ENCODE measurements at regions of chr11 and their contacts with region 1.

Region 1: DNA sequence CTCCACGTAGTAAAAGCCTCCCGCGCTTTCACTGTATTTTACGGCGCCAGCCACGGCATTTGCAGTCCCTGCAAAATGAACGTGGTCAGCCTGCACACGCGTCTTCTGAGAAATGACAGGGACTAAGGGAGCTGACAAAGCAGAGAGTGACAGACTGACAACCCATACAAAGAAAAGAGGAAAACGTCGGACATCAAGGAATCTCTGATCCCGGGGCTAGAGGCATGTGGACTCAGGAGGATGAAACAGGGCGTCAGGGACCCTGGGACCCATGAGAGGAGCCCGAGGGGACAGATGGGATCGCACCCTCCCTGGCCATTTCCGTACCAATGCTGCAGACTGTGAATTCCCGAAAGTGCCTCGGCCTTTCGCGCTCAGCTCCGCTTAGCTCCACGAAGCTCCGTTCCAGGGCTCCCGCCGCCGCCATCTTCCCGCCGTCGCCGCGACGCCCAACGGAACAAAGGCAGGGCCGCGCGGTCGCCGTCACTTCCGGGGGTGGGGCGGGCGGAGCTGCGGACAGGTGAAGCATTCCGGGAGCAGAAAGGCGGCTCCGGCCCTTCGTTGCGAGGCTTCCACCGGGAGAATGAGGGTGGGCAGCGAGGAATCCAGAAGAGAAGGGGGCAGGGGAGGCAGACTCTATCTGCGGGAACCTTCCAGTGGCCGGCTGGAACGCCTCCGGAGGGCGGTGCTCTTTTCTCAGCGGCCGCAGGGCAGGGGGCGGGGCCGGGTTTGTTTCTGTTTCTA is at the start of gene NUP160:
- DNase-seq: peak; percentile 74 to 93 (median 86)
- ATAC-seq: peak; percentile 86
- H3K4me3 ChIP-seq: peak within 1 kb of the TSS; percentile 75
- H3K4me3 Mint-ChIP-seq: peak within 1 kb of the TSS; percentile 100
- H3K27ac ChIP-seq: peak within 1 kb of the TSS; percentile 82 to 94
- H3K27ac Mint-ChIP-seq: peak within 1 kb of the TSS; percentile 98
- H3K4me1 ChIP-seq: peaks cover 46% of the 10 kb centered on the region
- H3K4me1 Mint-ChIP-seq: peaks cover 66% of the 10 kb centered on the region
- H3K27me3 ChIP-seq: no peaks in the 10 kb centered on the region
- H3K27me3 Mint-ChIP-seq: no peaks in the 10 kb centered on the region
- CTCF ChIP-seq: peak; percentile 15
- total RNA-seq, gene NUP160: 41.9 to 47.9 TPM

Region 2: DNA sequence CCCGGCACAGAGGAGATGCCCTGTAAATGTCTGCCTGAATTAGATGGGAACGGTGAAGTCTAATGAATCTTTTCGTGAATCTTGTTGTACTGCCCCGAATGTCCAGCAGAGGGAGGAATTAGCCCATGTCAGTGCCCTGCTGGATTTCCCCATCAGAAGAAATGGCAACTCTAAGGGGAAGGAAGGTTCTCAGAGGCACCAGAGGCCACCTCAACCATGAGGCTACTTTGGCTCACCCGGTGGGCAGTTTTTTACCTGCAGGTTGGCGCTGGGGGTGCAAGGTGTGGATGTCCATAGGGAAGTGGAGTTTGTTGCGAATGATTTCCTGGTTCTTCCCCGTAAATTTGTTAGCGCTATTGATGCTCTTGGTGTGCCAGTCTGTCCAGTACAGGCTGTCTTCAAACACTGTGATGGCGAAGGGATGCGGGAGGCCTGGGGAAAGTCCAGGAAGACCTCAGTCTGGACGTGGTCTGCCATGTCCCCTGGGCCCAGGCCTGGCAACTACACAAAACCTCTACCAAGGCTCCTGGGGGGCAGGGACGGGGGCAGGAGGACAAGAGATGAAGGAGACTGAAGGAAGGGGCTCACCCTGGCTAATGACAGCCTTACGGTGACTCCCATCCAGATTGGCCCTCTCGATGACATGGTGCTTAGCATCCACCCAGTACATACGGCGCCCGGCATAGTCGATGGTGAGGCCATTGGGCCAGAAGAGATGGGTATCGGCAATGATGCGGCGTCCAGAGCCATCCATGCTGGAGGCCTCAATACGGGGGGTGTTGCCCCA is 958.2 kb before region 1 on chr11:
- CTCF ChIA-PET with region 1: no interaction called
- POLR2A ChIA-PET with region 1: no interaction called
- intact Hi-C with region 1: loop called in 1 of 2 experiments (anchors 5 kb)
- DNase-seq: peak; percentile 47 to 86 (median 68)
- ATAC-seq: peak; percentile 96
- H3K4me3 ChIP-seq: no peak overlapping the region
- H3K4me3 Mint-ChIP-seq: no peak overlapping the region
- H3K27ac ChIP-seq: no peak overlapping the region
- H3K27ac Mint-ChIP-seq: no peak overlapping the region
- H3K4me1 ChIP-seq: no peaks in the 10 kb centered on the region
- H3K4me1 Mint-ChIP-seq: no peaks in the 10 kb centered on the region
- H3K27me3 ChIP-seq: peaks cover 0 to 4% of the 10 kb centered on the region in 2 experiments
- H3K27me3 Mint-ChIP-seq: peaks cover 13% of the 10 kb centered on the region
- CTCF ChIP-seq: peak; percentile 80

Region 3: DNA sequence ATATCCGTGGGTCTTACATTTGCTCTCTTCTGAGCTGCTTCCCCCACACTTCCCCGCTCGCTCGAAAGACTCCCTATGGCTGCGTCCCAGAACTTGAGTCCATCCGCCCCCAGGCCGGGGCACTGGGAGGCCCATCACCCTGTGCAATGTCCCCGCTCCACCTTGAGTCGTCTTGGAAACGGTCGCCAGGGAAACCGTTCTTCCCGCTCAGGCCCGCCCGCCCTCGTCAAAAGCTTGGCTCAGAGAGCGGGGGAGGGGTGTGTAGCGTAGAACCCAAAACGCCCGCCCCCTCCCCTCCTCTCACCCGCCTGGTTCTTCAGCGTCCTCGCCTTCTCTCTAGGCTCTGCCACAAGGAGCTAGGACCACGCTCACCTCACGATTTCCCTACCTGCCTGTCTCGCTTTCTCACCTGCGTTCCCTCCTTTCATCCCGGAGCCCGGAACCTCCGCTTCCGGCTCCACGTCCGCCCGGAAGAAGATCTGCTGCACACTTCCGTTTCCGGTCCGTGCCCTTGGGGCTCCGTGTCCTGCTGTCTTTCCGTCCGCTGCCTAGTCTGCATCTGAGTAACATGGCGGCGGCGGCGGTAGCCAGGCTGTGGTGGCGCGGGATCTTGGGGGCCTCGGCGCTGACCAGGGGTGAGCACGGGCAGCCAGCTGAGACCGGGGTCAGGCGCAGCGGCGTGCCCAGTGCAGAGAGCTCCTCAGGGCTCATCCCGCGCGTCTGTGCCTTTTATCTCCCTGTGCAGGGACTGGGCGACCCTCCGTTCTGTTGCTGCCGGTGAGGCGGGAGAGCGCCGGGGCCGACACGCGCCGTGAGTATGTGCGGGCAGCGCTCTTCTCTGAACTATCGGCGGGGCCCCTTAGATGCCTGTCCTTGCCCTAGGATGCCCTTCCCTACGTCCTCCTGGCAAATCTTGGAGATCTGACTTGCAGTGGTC is 269.3 kb before region 1 on chr11 and contains the starts of genes KBTBD4 and NDUFS3:
- CTCF ChIA-PET with region 1: no interaction called
- POLR2A ChIA-PET with region 1: no interaction called
- intact Hi-C with region 1: loop called in 1 of 2 experiments (anchors 5 kb)
- DNase-seq: peak; percentile 81 to 95 (median 85)
- ATAC-seq: peak; percentile 91
- H3K4me3 ChIP-seq: peak within 1 kb of the TSS; percentile 90
- H3K4me3 Mint-ChIP-seq: peak within 1 kb of the TSS; percentile 99
- H3K27ac ChIP-seq: peak within 1 kb of the TSS; percentile 76 to 81
- H3K27ac Mint-ChIP-seq: peak within 1 kb of the TSS; percentile 91
- H3K4me1 ChIP-seq: peaks cover 38% of the 10 kb centered on the region
- H3K4me1 Mint-ChIP-seq: peaks cover 41% of the 10 kb centered on the region
- H3K27me3 ChIP-seq: no peaks in the 10 kb centered on the region
- H3K27me3 Mint-ChIP-seq: no peaks in the 10 kb centered on the region
- CTCF ChIP-seq: no peak
- total RNA-seq, gene KBTBD4: 29.1 to 30.2 TPM
- total RNA-seq, gene NDUFS3: 139 to 144 TPM

Region 4: DNA sequence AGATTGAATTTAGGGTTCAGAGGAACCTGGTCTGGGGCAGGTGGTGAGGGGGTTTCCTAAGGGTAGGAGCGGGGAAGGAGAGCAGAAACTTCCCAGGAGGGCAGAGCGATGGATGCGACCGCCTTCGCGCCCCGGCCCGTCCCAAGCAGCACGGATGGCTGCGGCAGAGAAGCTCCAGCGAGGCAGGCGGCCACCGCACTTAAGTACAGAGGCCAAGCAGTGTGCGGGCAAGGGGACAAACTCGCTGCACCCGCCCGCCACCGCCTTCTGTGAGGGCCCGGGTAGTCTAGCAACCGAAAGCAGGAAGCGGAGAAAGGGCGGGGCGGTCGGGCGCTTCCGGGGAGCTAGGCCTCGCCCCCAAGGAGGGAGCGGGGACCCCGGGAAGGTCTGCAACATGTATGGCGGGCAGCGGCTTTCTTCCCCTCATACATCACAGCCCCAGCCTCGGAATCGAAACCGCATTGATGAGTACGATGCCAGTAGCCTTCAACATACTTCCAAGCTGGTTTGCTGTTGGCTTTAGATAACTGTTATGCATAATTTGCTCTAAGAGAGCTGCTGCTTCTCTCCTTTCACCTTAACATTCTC is 132.9 kb before region 1 on chr11 and contains the start of gene AGBL2:
- CTCF ChIA-PET with region 1: no interaction called
- POLR2A ChIA-PET with region 1: interaction called, 4 read pairs
- intact Hi-C with region 1: loop called in 1 of 2 experiments (anchors 10 kb)
- DNase-seq: peak; percentile 67 to 90 (median 80)
- ATAC-seq: peak; percentile 97
- H3K4me3 ChIP-seq: peak within 1 kb of the TSS; percentile 96
- H3K4me3 Mint-ChIP-seq: peak within 1 kb of the TSS; percentile 97
- H3K27ac ChIP-seq: peak within 1 kb of the TSS; percentile 91 to 94
- H3K27ac Mint-ChIP-seq: peak within 1 kb of the TSS; percentile 93
- H3K4me1 ChIP-seq: peaks cover 13% of the 10 kb centered on the region
- H3K4me1 Mint-ChIP-seq: peaks cover 19% of the 10 kb centered on the region
- H3K27me3 ChIP-seq: no peaks in the 10 kb centered on the region
- H3K27me3 Mint-ChIP-seq: no peaks in the 10 kb centered on the region
- CTCF ChIP-seq: no peak
- total RNA-seq, gene AGBL2: 3.6 to 4.4 TPM

Region 5: DNA sequence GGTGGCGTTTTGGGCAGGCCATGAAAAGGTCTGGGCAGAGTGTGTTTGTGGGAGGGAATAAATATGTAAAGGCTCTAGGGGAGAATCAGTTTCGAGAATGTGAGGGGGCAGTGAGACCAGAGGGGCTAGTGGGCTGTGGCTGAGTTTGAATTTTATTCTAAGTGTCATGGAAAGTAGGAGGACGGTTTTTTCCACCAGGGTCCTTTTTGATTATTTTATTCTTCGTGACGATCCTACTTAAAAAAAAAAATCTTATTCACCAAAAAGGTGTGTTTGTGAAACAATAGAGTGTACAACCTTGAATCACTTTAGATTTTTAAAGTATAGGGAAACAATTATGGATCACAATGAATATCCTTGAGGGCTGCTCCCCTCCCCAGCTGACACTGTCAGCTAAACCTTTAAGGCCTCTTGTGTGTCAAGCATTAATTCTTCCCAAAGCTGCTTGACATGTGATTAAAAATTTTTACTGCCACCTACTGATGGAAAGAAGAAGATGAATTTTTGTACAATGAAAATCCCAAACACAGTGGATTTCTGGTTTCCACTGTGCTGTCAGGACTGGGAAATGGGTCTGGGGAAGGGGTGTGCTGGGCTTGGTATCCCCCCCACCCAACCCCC is 261.1 kb after region 1 on chr11:
- CTCF ChIA-PET with region 1: interaction called, 3 read pairs
- POLR2A ChIA-PET with region 1: interaction called, 3 read pairs
- intact Hi-C with region 1: loop called in 1 of 2 experiments (anchors 5 kb)
- DNase-seq: peak in 3 of 14 experiments; percentile 63 to 65 (median 64)
- ATAC-seq: peak; percentile 45
- H3K4me3 ChIP-seq: peak overlapping the region; percentile 45
- H3K4me3 Mint-ChIP-seq: peak overlapping the region; percentile 25
- H3K27ac ChIP-seq: peak overlapping the region in 1 of 2 donors; percentile 45
- H3K27ac Mint-ChIP-seq: peak overlapping the region; percentile 60
- H3K4me1 ChIP-seq: peaks cover 52% of the 10 kb centered on the region
- H3K4me1 Mint-ChIP-seq: peaks cover 51% of the 10 kb centered on the region
- H3K27me3 ChIP-seq: no peaks in the 10 kb centered on the region
- H3K27me3 Mint-ChIP-seq: no peaks in the 10 kb centered on the region
- CTCF ChIP-seq: no peak

Measured in CD4-positive, alpha-beta T cell (primary cell).